ENCODE measurements at regions of chr7 and their contacts with region 1.

Region 1: GRCh38 chr7:117119192-117119924 is 166.1 kb downstream of the ST7 start:
- DNase-seq: peak; percentile 50 to 91
- H3K4me3 ChIP-seq: no peak overlapping the region
- H3K4me1 ChIP-seq: no peaks in the 10 kb centered on the region
- H3K27me3 ChIP-seq: no peaks in the 10 kb centered on the region

Region 2: GRCh38 chr7:116929914-116930913 is 189.1 kb before region 1 on chr7:
- in situ Hi-C with region 1: loop called (anchors 10 kb)
- DNase-seq: peak; percentile 68 to 88
- H3K4me3 ChIP-seq: no peak overlapping the region
- H3K4me1 ChIP-seq: peaks cover 3% of the 10 kb centered on the region; the same call in 1 of the 2 replicates
- H3K27me3 ChIP-seq: no peaks in the 10 kb centered on the region; the same call in 1 of the 2 replicates

Region 3: DNA sequence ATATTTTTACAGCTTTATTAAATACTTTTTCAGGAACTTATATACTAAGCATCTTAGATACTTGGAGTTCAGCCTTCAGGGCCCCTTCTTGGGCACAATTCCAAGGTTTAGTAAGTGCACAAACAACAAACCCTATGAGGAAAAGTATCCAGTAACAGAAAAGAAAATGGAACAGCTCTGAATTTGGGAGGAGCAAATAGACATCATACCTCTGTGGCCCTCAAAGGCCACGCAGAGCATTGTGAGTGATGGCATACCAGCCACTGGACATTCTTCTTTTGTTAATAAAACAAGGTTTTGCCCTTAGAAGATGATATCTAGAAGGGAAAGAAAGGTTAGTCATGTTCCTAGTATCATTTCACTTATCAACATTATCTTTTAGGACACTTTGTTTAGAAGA is 120.0 kb before region 1 on chr7:
- in situ Hi-C with region 1: loop called (anchors 10 kb)
- DNase-seq: no peak
- H3K4me3 ChIP-seq: no peak overlapping the region
- H3K4me1 ChIP-seq: no peaks in the 10 kb centered on the region
- H3K27me3 ChIP-seq: no peaks in the 10 kb centered on the region

Region 4: GRCh38 chr7:117051808-117052207 is 67.5 kb before region 1 on chr7:
- in situ Hi-C with region 1: no loop called
- DNase-seq: no peak
- H3K4me3 ChIP-seq: no peak overlapping the region
- H3K4me1 ChIP-seq: peaks cover 5% of the 10 kb centered on the region
- H3K27me3 ChIP-seq: no peaks in the 10 kb centered on the region